ENCODE measurements at regions of chr12 and their contacts with region 1.

Region 1: GRCh38 chr12:96399919-96400797 is at the start of gene CDK17:
- DNase-seq: peak; percentile 71 to 87 (median 82)
- H3K4me3 ChIP-seq: peak within 1 kb of the TSS; percentile 68 to 97 (median 90)
- H3K27ac ChIP-seq: peak within 1 kb of the TSS; percentile 93 to 100 (median 99)
- H3K27me3 ChIP-seq: no peaks in the 10 kb centered on the region
- CTCF ChIP-seq: peak in 49 of 56 donors; percentile 5 to 78 (median 45)
- total RNA-seq, gene CDK17: 56.6 to 132 (median 97.6) TPM

Region 2: GRCh38 chr12:96061864-96062453 is 338.2 kb before region 1 on chr12:
- intact Hi-C with region 1: loop called in 1 of 2 experiments (anchors 5 kb)
- DNase-seq: peak in 9 of 10 donors; percentile 31 to 80 (median 61)
- H3K4me3 ChIP-seq: no peak overlapping the region
- H3K27ac ChIP-seq: no peak overlapping the region
- H3K27me3 ChIP-seq: no peaks in the 10 kb centered on the region
- CTCF ChIP-seq: peak; percentile 59 to 93 (median 84)

Region 3: GRCh38 chr12:96233939-96234461 is 166.2 kb before region 1 on chr12:
- intact Hi-C with region 1: loop called (anchors 1 to 2 kb)
- DNase-seq: peak; percentile 86 to 98 (median 96)
- H3K4me3 ChIP-seq: peak overlapping the region in 28 of 59 donors; percentile 2 to 51 (median 27)
- H3K27ac ChIP-seq: peak overlapping the region; percentile 53 to 97 (median 88)
- H3K27me3 ChIP-seq: no peaks in the 10 kb centered on the region
- CTCF ChIP-seq: peak in 7 of 56 donors; percentile 15 to 35 (median 21)

Region 4: DNA sequence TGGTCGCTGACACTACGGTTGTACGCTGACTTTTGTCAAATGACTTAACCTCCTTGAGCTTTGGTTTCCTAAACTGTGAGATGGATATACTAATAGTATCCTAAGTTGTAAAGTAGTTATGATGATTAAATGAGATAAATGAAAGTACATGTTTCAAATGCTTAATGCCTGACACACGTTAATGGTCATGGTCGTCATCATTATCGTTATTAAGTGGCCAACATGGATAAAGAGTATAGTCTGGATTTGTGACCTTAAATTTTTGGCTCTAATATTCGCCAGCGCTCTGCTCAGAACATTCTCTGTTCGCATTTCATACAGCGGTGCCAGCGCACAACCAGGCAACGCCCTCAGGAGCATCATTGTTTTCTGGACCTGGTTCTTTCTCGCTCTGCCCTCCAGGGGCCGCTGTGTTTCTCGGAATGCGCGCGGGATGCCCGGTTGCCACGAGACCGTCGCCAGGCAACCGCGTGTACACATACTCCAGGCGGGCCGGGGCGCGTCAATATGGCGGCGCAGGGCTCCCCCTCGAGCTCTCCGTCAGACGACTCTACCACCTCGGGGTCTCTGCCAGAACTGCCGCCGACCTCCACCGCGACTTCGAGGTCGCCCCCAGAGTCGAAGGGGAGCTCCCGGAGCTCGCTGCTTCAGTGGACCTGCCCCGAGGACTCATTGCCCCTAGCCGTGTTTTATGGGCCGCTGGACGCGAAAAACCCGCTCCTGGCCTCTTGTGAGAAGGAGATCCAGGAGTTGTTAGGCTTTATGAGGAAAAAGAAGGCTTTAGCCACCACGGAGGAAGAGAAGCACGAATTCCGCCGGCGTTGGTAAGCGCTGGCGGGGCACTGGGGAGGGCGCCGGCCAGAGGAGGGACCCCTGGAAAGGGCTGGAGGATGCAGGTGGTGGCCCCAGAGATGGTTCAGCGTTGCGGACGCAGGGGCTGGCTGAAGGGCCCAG is 89.2 kb after region 1 on chr12 and contains the start of gene CFAP54:
- intact Hi-C with region 1: loop called (anchors 2 to 5 kb)
- DNase-seq: peak; percentile 89 to 96 (median 94)
- H3K4me3 ChIP-seq: peak within 1 kb of the TSS; percentile 52 to 99 (median 78)
- H3K27ac ChIP-seq: peak within 1 kb of the TSS in 19 of 59 donors; percentile 4 to 71 (median 44)
- H3K27me3 ChIP-seq: no peaks in the 10 kb centered on the region
- CTCF ChIP-seq: peak; percentile 70 to 94 (median 88)
- total RNA-seq, gene CFAP54: 3.2 to 17.7 (median 6.6) TPM

Measured in dorsolateral prefrontal cortex (tissue), 120 donors.